ENCODE measurements at regions of chr1 and their contacts with region 1.

Region 1: GRCh38 chr1:243850452-243851256 is 611 bp upstream of the AKT3 start:
- DNase-seq: peak; percentile 32 to 86
- H3K4me3 ChIP-seq: peak overlapping the region; percentile 89 to 99
- H3K27ac ChIP-seq: peak overlapping the region; percentile 96 to 97
- H3K4me1 ChIP-seq: peaks cover 0 to 8% of the 10 kb centered on the region in 2 donors
- H3K27me3 ChIP-seq: no peaks in the 10 kb centered on the region
- CTCF ChIP-seq: no peak

Region 2: GRCh38 chr1:243255791-243256512 is 594.7 kb before region 1 on chr1 and contains the start of gene SDCCAG8:
- intact Hi-C with region 1: loop called (anchors 5 kb)
- DNase-seq: peak; percentile 98 to 100
- H3K4me3 ChIP-seq: peak within 1 kb of the TSS; percentile 84 to 99
- H3K27ac ChIP-seq: peak within 1 kb of the TSS; percentile 97 to 99
- H3K4me1 ChIP-seq: peaks cover 3 to 22% of the 10 kb centered on the region in 2 donors
- H3K27me3 ChIP-seq: no peaks in the 10 kb centered on the region
- CTCF ChIP-seq: no peak
- total RNA-seq, gene SDCCAG8: 97.1 TPM

Region 3: GRCh38 chr1:243742819-243743218 is 107.8 kb before region 1 on chr1:
- intact Hi-C with region 1: loop called (anchors 5 kb)
- DNase-seq: no peak
- H3K4me3 ChIP-seq: no peak overlapping the region
- H3K27ac ChIP-seq: peak overlapping the region in 1 of 2 donors; percentile 1
- H3K4me1 ChIP-seq: peaks cover 6 to 33% of the 10 kb centered on the region in 2 donors
- H3K27me3 ChIP-seq: no peaks in the 10 kb centered on the region
- CTCF ChIP-seq: no peak

Region 4: GRCh38 chr1:243798726-243799125 is 51.9 kb before region 1 on chr1:
- intact Hi-C with region 1: no loop called
- DNase-seq: no peak
- H3K4me3 ChIP-seq: no peak overlapping the region
- H3K27ac ChIP-seq: no peak overlapping the region
- H3K4me1 ChIP-seq: peaks cover 0 to 5% of the 10 kb centered on the region in 2 donors
- H3K27me3 ChIP-seq: no peaks in the 10 kb centered on the region
- CTCF ChIP-seq: no peak

Region 5: DNA sequence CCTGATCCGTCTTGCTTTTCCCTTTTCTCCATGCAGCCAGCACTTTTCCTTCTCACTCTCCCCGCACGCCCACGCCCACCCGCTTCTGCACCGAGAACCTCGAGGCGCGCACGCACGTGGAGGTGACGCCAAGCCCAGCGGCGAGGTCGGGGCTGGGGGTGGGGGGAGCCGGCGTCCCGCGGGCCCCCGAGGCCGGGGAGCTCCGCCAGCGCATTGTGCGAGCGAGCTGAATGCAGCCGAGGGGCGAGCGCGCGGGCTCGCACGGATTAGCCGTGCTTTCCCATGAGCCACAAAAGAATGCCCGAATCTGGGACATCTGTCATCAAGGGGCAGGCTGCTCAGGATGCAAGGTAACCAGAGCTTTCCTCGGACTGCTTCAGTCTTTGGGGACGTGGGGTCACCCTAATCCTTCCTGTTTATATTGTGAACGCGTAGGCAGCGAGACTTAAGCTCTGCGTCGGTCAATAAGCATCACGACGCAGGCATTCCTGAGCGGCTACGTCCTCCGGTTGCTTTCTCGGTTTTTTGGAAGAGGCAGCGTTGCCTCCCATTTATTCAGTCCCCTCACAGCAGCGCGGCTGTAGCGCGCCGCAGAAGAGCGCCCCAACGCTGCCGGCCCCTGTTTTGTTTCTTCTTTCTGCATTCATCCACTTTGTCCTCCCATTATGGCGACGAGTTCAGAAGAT is 66.7 kb after region 1 on chr1:
- intact Hi-C with region 1: loop called (anchors 1 kb)
- DNase-seq: peak in 1 of 2 donors; percentile 67
- H3K4me3 ChIP-seq: peak overlapping the region; percentile 52 to 77
- H3K27ac ChIP-seq: peak overlapping the region in 1 of 2 donors; percentile 0
- H3K4me1 ChIP-seq: peaks cover 0 to 9% of the 10 kb centered on the region in 2 donors
- H3K27me3 ChIP-seq: no peaks in the 10 kb centered on the region
- CTCF ChIP-seq: no peak

Region 6: GRCh38 chr1:244272471-244273261 is 422.0 kb after region 1 on chr1:
- intact Hi-C with region 1: loop called (anchors 5 kb)
- DNase-seq: peak in 1 of 2 donors; percentile 81
- H3K4me3 ChIP-seq: no peak overlapping the region
- H3K27ac ChIP-seq: peak overlapping the region; percentile 3 to 54
- H3K4me1 ChIP-seq: peaks cover 0 to 3% of the 10 kb centered on the region in 2 donors
- H3K27me3 ChIP-seq: no peaks in the 10 kb centered on the region
- CTCF ChIP-seq: peak; percentile 87 to 93 (median 91)

Measured in ascending aorta (tissue), 2 donors.